Left ventricle myocardium superior (tissue), 1 donor: ENCODE measurements at regions of chr4 and their contacts with region 1.

Region 1: GRCh38 chr4:25312496-25313200 is at the start of gene ZCCHC4:
- DNase-seq: peak; percentile 93
- ATAC-seq: peak; percentile 100
- total RNA-seq, gene ZCCHC4: 9.8 TPM

Region 2: DNA sequence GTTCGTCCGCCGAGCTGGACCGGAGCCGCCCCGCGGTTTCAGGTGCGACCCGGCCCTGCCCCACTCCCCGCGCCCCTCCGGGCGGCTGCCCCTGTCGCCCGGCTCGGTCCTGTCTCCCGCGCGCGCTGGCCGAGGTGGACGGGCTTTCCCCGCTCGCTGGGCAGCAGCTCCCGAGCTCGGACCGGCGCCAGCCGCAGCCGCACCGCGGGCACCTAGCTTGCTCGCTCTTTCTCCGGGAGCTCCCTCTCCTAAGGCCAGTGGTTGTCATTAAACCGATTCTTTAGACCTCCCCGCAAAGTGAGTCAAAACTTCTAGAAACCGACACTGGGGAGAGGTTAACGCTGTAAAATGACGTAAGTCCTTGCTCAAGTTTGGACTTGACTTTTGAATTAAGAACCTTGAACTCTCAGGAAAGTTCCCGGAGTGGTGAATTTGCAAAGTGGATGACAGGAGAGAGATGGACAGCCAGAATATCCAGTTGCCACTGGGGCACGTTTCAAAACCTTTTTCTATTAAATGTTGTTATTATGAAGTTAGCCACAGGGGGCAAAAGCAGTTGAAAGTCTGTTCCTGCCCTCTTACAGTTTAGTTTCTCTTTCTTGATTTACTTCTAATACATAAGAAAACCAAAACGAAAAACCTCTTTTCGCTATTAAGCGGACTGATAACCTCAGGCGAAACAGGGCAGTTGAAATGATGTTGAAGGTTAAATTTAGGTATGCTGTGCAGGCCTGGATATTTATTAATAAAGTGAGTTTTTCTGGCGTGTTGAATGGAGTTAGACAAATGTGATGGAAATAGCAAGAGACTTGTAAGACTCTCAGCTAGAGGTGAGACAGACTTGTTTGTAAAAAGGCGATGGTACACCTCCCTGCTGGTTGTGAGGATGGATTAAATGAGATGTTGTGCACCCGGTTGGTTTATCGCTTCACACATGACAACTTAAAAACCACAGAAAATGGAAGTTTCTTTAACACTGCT is 78.0 kb before region 1 on chr4:
- intact Hi-C with region 1: loop called (anchors 2 kb)
- DNase-seq: peak; percentile 74
- ATAC-seq: peak; percentile 76